ENCODE measurements at regions of chr18 and their contacts with region 1.

Region 1: DNA sequence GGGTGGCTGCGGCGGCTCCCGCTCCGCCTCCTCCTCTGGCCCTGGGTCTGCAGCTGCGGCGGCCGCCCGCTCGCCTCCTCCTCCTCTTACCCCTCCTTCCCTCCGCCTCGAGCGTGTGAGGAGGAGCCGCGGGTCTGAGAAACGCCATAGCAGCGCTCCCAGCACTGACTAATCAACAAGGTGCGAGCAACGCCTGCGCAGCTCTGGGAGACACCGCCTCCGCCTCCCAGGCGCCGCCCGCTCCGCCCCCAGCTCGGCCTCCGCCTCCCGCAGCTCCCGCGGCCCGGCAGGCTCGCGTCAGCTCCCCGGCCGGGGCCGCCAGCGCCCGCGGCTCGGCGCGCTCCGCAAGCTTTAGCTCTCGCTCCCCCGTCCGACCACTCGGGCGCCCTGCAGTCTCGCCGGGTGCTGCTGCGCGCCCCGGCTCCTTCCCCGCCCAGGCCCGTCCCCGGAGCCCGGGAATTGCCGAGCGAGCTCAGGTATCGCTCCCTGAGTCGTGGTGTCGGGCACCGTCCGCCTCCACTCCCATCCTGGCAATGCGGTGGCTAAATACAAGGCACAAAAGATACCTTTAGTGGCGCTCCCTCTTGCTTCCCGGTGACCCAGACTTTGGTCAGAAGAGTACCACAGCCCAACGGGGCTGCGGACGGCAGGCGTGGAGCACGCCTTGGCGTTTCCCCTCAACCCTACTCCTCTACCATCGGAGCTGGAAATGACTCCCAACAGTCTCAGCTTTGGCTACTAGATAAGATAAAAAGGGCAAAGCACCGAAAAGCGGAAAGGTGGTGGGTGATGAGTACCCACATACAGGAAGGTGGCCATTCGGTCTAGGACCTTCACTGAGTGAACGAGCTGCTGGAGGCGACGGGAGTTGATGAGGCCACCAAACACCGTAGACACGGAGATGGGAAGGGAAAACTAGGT is at the start of gene GAREM1:
- DNase-seq: peak; percentile 69
- H3K4me3 ChIP-seq: peak within 1 kb of the TSS; percentile 68
- CTCF ChIP-seq: peak; percentile 80

Region 2: DNA sequence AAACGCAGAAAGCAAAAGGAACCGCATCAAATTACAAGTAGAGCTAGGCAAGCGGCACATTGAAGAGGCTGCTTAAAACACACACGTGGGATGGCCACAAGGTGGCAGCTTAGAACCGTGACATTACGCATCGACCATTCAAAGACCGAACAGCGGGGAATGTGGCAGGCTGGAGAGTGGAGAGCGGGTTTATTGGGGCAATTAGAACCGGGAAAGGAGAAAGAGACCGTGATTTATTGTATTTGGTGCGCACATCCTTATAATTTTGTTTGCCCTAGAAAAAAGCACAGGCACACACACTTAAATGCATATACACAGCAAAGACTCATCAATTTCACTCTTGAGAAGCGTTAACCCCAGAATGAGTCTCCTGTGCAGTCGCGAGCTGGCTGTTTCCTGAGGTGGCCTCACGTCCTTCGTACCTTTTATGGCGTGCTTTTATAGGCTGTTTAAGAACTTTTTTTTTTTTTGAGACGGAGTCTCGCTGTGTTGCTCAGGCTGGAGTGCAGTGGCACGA is 312.8 kb before region 1 on chr18:
- CTCF ChIA-PET with region 1: interaction called, 40 read pairs
- POLR2A ChIA-PET with region 1: no interaction called
- DNase-seq: peak; percentile 46
- H3K4me3 ChIP-seq: peak overlapping the region; percentile 38
- CTCF ChIP-seq: peak; percentile 86

Region 3: GRCh38 chr18:32271672-32272208 is 199.2 kb before region 1 on chr18:
- CTCF ChIA-PET with region 1: interaction called, 168 read pairs
- POLR2A ChIA-PET with region 1: interaction called, 5 read pairs
- DNase-seq: peak; percentile 3
- H3K4me3 ChIP-seq: no peak overlapping the region
- CTCF ChIP-seq: peak; percentile 59

Region 4: GRCh38 chr18:32276906-32277305 is 194.1 kb before region 1 on chr18:
- CTCF ChIA-PET with region 1: interaction called, 186 read pairs
- POLR2A ChIA-PET with region 1: interaction called, 5 read pairs
- DNase-seq: no peak
- H3K4me3 ChIP-seq: no peak overlapping the region
- CTCF ChIP-seq: no peak

Region 5: GRCh38 chr18:32289483-32290075 is 181.4 kb before region 1 on chr18:
- CTCF ChIA-PET with region 1: interaction called, 186 read pairs
- POLR2A ChIA-PET with region 1: interaction called, 3 read pairs
- DNase-seq: no peak
- H3K4me3 ChIP-seq: no peak overlapping the region
- CTCF ChIP-seq: peak; percentile 73

Region 6: DNA sequence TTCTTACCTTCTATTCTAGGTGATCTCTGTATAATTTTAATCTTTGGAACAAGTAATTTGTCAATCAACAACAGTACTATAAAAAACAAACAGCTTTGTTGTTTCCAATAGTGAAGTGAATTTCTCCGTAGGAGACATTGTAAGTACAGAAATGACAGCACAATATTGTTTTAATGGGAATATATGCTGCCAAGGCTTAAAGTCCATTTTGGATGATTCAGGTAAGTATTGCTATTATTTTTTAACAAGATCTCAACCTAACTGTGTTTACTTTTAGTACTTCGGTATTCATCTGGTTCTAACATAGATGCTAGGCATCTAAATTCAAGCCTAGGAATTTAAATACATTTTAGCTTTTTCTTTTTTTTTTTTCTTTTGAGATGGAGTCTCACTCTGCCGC is 175.4 kb before region 1 on chr18:
- CTCF ChIA-PET with region 1: interaction called, 186 read pairs
- POLR2A ChIA-PET with region 1: no interaction called
- DNase-seq: no peak
- H3K4me3 ChIP-seq: no peak overlapping the region
- CTCF ChIP-seq: no peak

Region 7: DNA sequence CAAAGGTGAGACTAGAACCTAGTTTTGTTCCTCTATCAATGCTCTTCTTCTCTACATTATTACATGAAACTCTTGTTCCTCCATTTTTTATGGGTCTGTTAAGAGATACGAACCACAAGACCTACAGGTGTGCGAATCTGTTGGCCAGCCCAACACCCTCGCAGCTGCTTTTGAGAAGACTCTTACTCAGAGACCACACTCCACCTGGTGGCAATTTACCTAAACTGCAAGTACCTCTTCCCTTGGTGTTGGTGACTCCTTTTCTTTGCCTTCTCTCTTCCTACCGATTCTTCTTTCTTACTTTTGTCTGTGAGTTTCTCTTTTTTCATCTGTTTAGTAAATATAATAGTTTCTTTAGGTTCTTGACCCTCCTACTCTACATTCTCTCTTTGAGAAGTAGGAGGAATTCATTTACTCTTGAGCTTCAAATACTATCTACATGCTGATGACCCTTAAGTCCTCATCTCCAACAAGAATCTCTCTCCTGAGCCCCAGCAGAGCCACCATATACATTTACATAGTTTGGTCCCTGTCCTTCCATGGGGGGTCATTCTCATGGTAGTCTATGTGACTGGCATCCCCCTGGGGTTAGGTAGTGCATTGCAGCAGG is 81.6 kb after region 1 on chr18:
- CTCF ChIA-PET with region 1: interaction called, 10 read pairs
- POLR2A ChIA-PET with region 1: no interaction called
- DNase-seq: peak; percentile 17
- H3K4me3 ChIP-seq: no peak overlapping the region
- CTCF ChIP-seq: peak; percentile 71